Gastrocnemius medialis (tissue), 4 donors: ENCODE measurements at regions of chr11 and their contacts with region 1.

Region 1: DNA sequence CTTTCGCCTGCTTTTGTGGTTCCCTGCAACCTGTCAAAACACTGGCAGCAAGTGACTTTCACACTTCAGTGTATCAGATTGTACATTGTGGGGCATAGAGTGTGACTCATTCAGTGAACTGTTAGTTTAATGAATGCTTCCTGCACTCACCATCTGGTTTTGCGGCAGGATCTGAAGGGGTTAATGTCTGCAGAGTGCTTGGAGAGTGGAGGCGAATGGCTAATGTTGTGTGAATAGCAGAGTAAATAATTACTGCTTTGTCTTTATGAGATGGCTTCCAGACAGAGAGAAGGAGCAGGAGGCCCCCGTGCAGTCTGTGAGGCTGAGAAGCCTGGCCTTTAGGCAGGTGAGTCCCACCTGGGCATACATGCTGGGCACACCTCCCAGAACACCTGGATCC is 454.3 kb upstream of the KIRREL3 start:
- DNase-seq: no peak
- ATAC-seq: no peak
- H3K4me3 ChIP-seq: no peak overlapping the region
- H3K27ac ChIP-seq: no peak overlapping the region
- H3K4me1 ChIP-seq: no peaks in the 10 kb centered on the region
- H3K27me3 ChIP-seq: no peaks in the 10 kb centered on the region
- CTCF ChIP-seq: no peak
- POLR2A ChIP-seq: no peak

Region 2: DNA sequence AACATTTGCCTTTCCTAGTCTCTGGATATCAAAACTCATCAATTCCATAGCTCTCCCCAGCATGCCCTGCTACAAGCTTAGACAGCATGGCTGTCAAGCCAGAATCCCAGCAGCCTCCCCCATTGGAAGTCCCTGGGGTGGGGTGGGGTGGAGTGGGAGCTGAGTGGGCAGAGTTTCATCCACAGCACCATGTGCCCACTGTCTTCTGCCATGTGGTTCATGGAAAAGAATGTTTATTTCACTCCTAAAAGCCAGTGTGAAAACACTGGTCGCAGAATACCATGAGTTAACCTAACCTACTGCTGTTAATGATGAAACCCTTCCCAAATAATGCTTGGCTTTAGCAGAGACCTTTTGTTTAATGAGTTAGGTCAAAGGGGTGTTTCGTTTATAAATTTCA is 374.1 kb before region 1 on chr11:
- in situ Hi-C with region 1: no loop called
- intact Hi-C with region 1: loop called (anchors 5 kb)
- DNase-seq: no peak
- ATAC-seq: no peak
- H3K4me3 ChIP-seq: no peak overlapping the region
- H3K27ac ChIP-seq: no peak overlapping the region
- H3K4me1 ChIP-seq: no peaks in the 10 kb centered on the region
- H3K27me3 ChIP-seq: no peaks in the 10 kb centered on the region
- CTCF ChIP-seq: no peak
- POLR2A ChIP-seq: no peak